MCF 10A (cell line): ENCODE measurements at regions of chr1 and their contacts with region 1.

Region 1: GRCh38 chr1:39378377-39378776 is 113.1 kb upstream of the BMP8A start:
- DNase-seq: peak; percentile 80
- H3K4me3 Mint-ChIP-seq: no peak overlapping the region
- H3K27ac Mint-ChIP-seq: no peak overlapping the region
- H3K4me1 Mint-ChIP-seq: peaks cover 7% of the 10 kb centered on the region
- H3K27me3 Mint-ChIP-seq: no peaks in the 10 kb centered on the region
- CTCF ChIP-seq: peak; percentile 41

Region 2: GRCh38 chr1:38848071-38848470 is 530.3 kb before region 1 on chr1:
- CTCF ChIA-PET with region 1: no interaction called
- POLR2A ChIA-PET with region 1: no interaction called
- intact Hi-C with region 1: no loop called
- DNase-seq: no peak
- H3K4me3 Mint-ChIP-seq: no peak overlapping the region
- H3K27ac Mint-ChIP-seq: no peak overlapping the region
- H3K4me1 Mint-ChIP-seq: peaks cover 14% of the 10 kb centered on the region
- H3K27me3 Mint-ChIP-seq: no peaks in the 10 kb centered on the region
- CTCF ChIP-seq: no peak

Region 3: DNA sequence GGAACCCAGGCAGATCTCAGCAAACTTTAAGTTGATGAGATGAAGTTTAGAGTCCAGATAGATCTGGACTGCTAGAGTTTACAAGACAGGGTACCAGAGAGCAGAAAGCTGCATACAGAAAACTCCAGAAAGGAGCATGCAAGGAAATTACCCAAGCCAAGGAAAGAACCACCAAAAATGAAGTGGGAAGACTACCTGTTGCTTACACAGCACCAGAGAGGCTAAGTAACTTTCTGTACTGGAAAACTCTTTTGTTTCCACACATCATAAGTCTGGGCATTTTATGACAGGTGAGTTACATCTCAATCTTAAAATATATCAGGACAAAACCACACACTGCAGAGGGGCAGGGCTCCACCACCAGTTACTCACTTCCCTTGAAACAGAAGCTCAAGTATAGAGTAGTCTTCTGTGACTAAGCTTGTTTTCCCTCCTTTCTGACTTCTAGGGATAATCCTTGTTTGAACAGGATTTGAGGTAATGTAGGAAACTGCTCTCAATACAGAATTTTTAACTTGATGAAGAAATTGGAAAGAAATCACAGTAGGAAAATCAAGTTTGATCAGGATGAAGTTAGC is 479.6 kb before region 1 on chr1:
- CTCF ChIA-PET with region 1: no interaction called
- POLR2A ChIA-PET with region 1: no interaction called
- intact Hi-C with region 1: no loop called
- DNase-seq: no peak
- H3K4me3 Mint-ChIP-seq: no peak overlapping the region
- H3K27ac Mint-ChIP-seq: no peak overlapping the region
- H3K4me1 Mint-ChIP-seq: no peaks in the 10 kb centered on the region
- H3K27me3 Mint-ChIP-seq: no peaks in the 10 kb centered on the region
- CTCF ChIP-seq: no peak

Region 4: DNA sequence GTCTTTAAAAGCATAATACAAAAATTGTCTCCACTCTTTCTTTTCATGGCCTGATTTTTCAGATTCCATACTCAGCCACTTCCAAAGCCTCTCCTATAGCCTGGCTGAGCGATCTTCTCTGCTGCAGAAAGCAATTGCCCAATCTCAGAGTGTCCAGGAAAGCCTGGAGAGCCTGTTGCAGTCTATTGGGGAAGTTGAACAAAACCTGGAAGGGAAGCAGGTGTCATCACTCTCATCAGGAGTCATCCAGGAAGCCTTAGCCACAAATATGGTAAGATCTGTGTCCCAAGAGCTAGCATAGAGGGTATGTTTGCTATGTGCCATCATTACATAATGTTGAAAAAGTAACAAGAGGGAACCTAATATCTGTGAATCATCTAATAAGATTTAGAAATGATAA is 17.6 kb before region 1 on chr1:
- CTCF ChIA-PET with region 1: interaction called, 11 read pairs
- POLR2A ChIA-PET with region 1: no interaction called
- intact Hi-C with region 1: no loop called
- DNase-seq: peak; percentile 14
- H3K4me3 Mint-ChIP-seq: no peak overlapping the region
- H3K27ac Mint-ChIP-seq: peak overlapping the region; percentile 81
- H3K4me1 Mint-ChIP-seq: peaks cover 12% of the 10 kb centered on the region
- H3K27me3 Mint-ChIP-seq: no peaks in the 10 kb centered on the region
- CTCF ChIP-seq: no peak

Region 5: GRCh38 chr1:39368045-39368444 is 10.3 kb before region 1 on chr1:
- CTCF ChIA-PET with region 1: interaction called, 10 read pairs
- POLR2A ChIA-PET with region 1: no interaction called
- intact Hi-C with region 1: no loop called
- DNase-seq: no peak
- H3K4me3 Mint-ChIP-seq: no peak overlapping the region
- H3K27ac Mint-ChIP-seq: no peak overlapping the region
- H3K4me1 Mint-ChIP-seq: peaks cover 5% of the 10 kb centered on the region
- H3K27me3 Mint-ChIP-seq: no peaks in the 10 kb centered on the region
- CTCF ChIP-seq: no peak

Region 6: GRCh38 chr1:39391691-39392679 is 13.6 kb after region 1 on chr1:
- CTCF ChIA-PET with region 1: interaction called, 45 read pairs
- POLR2A ChIA-PET with region 1: interaction called, 16 read pairs
- intact Hi-C with region 1: no loop called
- DNase-seq: peak; percentile 82
- H3K4me3 Mint-ChIP-seq: peak overlapping the region; percentile 36
- H3K27ac Mint-ChIP-seq: peak overlapping the region; percentile 90
- H3K4me1 Mint-ChIP-seq: peaks cover 58% of the 10 kb centered on the region
- H3K27me3 Mint-ChIP-seq: no peaks in the 10 kb centered on the region
- CTCF ChIP-seq: no peak

Region 7: GRCh38 chr1:39398278-39399021 is 20.1 kb after region 1 on chr1:
- CTCF ChIA-PET with region 1: interaction called, 12 read pairs
- POLR2A ChIA-PET with region 1: interaction called, 7 read pairs
- intact Hi-C with region 1: no loop called
- DNase-seq: peak; percentile 92
- H3K4me3 Mint-ChIP-seq: peak overlapping the region; percentile 47
- H3K27ac Mint-ChIP-seq: peak overlapping the region; percentile 83
- H3K4me1 Mint-ChIP-seq: peaks cover 46% of the 10 kb centered on the region
- H3K27me3 Mint-ChIP-seq: no peaks in the 10 kb centered on the region
- CTCF ChIP-seq: no peak

Region 8: GRCh38 chr1:39408641-39409054 is 30.3 kb after region 1 on chr1:
- CTCF ChIA-PET with region 1: interaction called, 43 read pairs
- POLR2A ChIA-PET with region 1: interaction called, 6 read pairs
- intact Hi-C with region 1: loop called (anchors 1 kb)
- DNase-seq: peak; percentile 93
- H3K4me3 Mint-ChIP-seq: peak overlapping the region; percentile 83
- H3K27ac Mint-ChIP-seq: peak overlapping the region; percentile 71
- H3K4me1 Mint-ChIP-seq: peaks cover 55% of the 10 kb centered on the region
- H3K27me3 Mint-ChIP-seq: no peaks in the 10 kb centered on the region
- CTCF ChIP-seq: no peak

Region 9: DNA sequence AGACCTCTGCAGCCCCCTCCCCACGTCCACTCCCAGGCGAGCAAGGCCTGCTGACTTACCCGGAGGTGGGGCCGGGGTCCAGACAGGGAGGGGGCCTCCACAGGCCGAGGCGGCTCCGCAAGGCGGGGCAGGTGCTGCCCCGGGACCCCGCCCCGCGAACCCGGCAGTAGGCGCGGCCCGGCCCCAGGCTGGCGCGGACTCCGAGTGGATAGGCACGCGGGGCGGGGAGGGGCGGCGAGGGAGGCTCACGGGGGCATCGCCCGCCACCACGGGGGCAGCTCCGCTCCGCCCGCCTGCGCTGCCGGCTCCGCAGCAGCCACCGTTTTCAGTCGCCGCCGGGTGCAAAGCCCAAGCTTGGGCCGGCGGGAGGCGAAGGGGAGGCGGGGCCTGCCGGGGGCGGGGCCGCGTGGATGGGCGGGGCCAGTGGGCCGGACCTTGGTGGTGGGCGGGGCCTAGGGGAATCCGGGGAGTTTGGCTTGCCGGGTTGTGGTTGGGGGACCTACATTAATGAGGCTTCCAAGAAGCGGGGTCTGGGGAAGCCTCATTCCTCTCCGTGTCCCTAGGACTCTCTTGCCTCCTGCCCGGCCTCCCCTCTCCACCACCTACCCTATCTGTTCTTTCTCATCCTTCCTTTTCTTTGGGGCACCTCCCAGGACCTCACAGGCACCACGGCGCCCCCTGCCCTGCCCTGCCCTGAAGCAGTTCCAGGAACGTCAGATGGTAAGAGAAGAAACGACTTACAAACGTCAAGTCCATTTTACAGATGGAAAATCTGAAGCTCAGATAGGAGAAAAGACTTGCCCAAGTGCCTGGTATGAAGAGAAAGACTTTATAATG is 1287.2 kb after region 1 on chr1 and contains the start of gene RIMS3:
- CTCF ChIA-PET with region 1: no interaction called
- POLR2A ChIA-PET with region 1: no interaction called
- intact Hi-C with region 1: no loop called
- DNase-seq: peak; percentile 67
- H3K4me3 Mint-ChIP-seq: peak within 1 kb of the TSS; percentile 66
- H3K27ac Mint-ChIP-seq: no peak within 1 kb of the TSS
- H3K4me1 Mint-ChIP-seq: peaks cover 18% of the 10 kb centered on the region
- H3K27me3 Mint-ChIP-seq: no peaks in the 10 kb centered on the region
- CTCF ChIP-seq: no peak
- total RNA-seq, gene RIMS3: 0.29 and 0.58 TPM in 2 replicates